K562 (cell line): ENCODE measurements at regions of chr13 and their contacts with region 1.

Region 1: GRCh38 chr13:93180356-93180969 is 46.1 kb upstream of the GPC6 start:
- DNase-seq: no peak
- ATAC-seq: no peak
- H3K4me3 ChIP-seq: no peak overlapping the region
- H3K27ac ChIP-seq: no peak overlapping the region
- H3K4me1 ChIP-seq: no peaks in the 10 kb centered on the region
- H3K27me3 ChIP-seq: no peaks in the 10 kb centered on the region
- CTCF ChIP-seq: no peak
- EP300 ChIP-seq: no peak
- POLR2A ChIP-seq: no peak
- RAD21 ChIP-seq: no peak

Region 2: DNA sequence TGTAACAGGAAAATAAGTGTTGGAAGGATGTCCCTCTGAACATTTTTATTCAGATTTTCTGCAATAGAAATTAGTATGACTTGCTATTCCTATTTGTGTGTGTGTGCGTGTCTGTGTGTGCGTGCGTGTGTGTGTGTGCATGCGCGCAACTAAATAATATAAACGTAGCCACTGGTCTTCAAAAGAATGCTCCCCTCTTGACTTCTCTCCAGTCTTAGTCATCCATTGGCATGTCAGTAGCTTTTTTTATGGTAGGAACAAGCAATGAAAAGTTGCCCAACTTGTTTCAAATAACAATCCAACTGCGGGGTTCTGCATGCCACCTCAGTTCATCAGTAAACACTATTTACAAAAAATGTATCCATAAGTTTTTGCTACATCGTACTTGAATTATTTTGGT is 295.7 kb after region 1 on chr13:
- CTCF ChIA-PET with region 1: no interaction called
- POLR2A ChIA-PET with region 1: no interaction called
- in situ Hi-C with region 1: loop called (anchors 25 kb)
- intact Hi-C with region 1: no loop called
- DNase-seq: no peak
- ATAC-seq: no peak
- H3K4me3 ChIP-seq: no peak overlapping the region
- H3K27ac ChIP-seq: no peak overlapping the region
- H3K4me1 ChIP-seq: no peaks in the 10 kb centered on the region
- H3K27me3 ChIP-seq: no peaks in the 10 kb centered on the region
- CTCF ChIP-seq: no peak
- EP300 ChIP-seq: no peak
- POLR2A ChIP-seq: no peak
- RAD21 ChIP-seq: no peak

Region 3: GRCh38 chr13:94992036-94992960 is 1811.8 kb after region 1 on chr13:
- CTCF ChIA-PET with region 1: no interaction called
- POLR2A ChIA-PET with region 1: no interaction called
- in situ Hi-C with region 1: no loop called
- intact Hi-C with region 1: no loop called
- DNase-seq: no peak
- ATAC-seq: no peak
- H3K4me3 ChIP-seq: no peak overlapping the region
- H3K27ac ChIP-seq: no peak overlapping the region
- H3K4me1 ChIP-seq: no peaks in the 10 kb centered on the region
- H3K27me3 ChIP-seq: no peaks in the 10 kb centered on the region; a peak in 1 of 5 replicates
- CTCF ChIP-seq: no peak
- EP300 ChIP-seq: no peak
- POLR2A ChIP-seq: no peak
- RAD21 ChIP-seq: no peak